B cell (primary cell): ENCODE measurements at regions of chr18 and their contacts with region 1.

Region 1: GRCh38 chr18:50350699-50351098 is 24.1 kb upstream of the SKA1 start:
- DNase-seq: no peak
- ATAC-seq: no peak
- H3K4me3 ChIP-seq: no peak overlapping the region
- H3K4me3 Mint-ChIP-seq: no peak overlapping the region
- H3K27ac ChIP-seq: no peak overlapping the region
- H3K27ac Mint-ChIP-seq: no peak overlapping the region
- H3K4me1 ChIP-seq: no peaks in the 10 kb centered on the region
- H3K4me1 Mint-ChIP-seq: peaks cover under 1% of the 10 kb centered on the region
- H3K27me3 ChIP-seq: peaks cover 0 to 8% (median 0%) of the 10 kb centered on the region in 4 experiments
- H3K27me3 Mint-ChIP-seq: peaks cover 27% of the 10 kb centered on the region
- CTCF ChIP-seq: no peak

Region 2: DNA sequence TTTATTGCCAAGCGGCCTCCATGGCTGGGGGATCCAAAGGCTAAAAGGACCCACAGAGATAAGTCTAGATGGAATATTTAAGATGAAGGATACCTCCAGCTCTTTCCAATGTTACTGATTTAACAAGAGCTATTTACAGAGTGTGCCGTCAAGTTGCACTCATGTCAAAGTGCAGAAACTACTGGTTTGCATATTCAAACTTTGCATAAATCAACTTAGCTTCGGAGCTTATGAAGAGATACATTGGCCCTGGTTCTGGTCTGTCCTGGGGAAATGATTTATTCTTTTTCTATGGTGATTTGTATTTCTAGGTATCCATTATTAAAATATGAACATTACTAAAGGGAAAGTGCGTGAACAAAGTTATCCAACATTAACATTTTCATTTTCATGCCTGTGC is 141.4 kb before region 1 on chr18:
- CTCF ChIA-PET with region 1: no interaction called
- POLR2A ChIA-PET with region 1: no interaction called
- intact Hi-C with region 1: no loop called
- DNase-seq: no peak
- ATAC-seq: no peak
- H3K4me3 ChIP-seq: no peak overlapping the region
- H3K4me3 Mint-ChIP-seq: no peak overlapping the region
- H3K27ac ChIP-seq: no peak overlapping the region
- H3K27ac Mint-ChIP-seq: no peak overlapping the region
- H3K4me1 ChIP-seq: no peaks in the 10 kb centered on the region
- H3K4me1 Mint-ChIP-seq: no peaks in the 10 kb centered on the region
- H3K27me3 ChIP-seq: peaks cover 0 to 28% (median 14%) of the 10 kb centered on the region in 4 experiments
- H3K27me3 Mint-ChIP-seq: peaks cover 52% of the 10 kb centered on the region
- CTCF ChIP-seq: no peak

Region 3: DNA sequence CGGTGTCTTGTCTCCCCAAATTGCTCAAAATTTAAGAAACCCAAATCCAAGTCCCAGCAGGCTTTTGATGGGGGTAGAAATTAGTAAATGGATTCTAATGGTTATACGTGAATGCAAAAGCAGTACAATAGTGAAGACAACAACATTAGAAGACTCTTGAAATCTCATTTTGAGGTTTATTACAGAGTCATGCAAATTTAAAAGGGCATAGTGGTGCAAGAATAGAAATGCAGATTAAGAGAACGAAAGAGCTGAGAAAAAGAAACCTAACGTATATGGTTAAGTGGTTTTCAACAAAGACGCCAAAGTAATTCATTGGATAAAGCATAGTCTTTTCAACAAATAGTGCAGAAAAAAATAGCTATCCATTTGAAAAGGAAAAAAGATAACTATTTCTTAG is 30.0 kb before region 1 on chr18:
- CTCF ChIA-PET with region 1: interaction called, 3 read pairs
- POLR2A ChIA-PET with region 1: no interaction called
- intact Hi-C with region 1: loop called (anchors 2 kb)
- DNase-seq: no peak
- ATAC-seq: no peak
- H3K4me3 ChIP-seq: peak overlapping the region in 1 of 5 experiments; percentile 9
- H3K4me3 Mint-ChIP-seq: peak overlapping the region; percentile 48
- H3K27ac ChIP-seq: no peak overlapping the region
- H3K27ac Mint-ChIP-seq: no peak overlapping the region
- H3K4me1 ChIP-seq: peaks cover 13 to 15% of the 10 kb centered on the region in 2 donors
- H3K4me1 Mint-ChIP-seq: peaks cover 24% of the 10 kb centered on the region
- H3K27me3 ChIP-seq: no peaks in the 10 kb centered on the region
- H3K27me3 Mint-ChIP-seq: no peaks in the 10 kb centered on the region
- CTCF ChIP-seq: no peak